Activated T-helper 2 cell treated with anti-CD3 and anti-CD28 coated beads, Interferon-gamma antibody, Interleukin-2, Interleukin-4, amounts not matched to agents 10 μg/mL and 5 μg/mL and 100 μg/mL, durations not matched to agents 14 hours and 24 hours and 36 hours (primary cell): ENCODE measurements at regions of chr12 and their contacts with region 1.

Region 1: DNA sequence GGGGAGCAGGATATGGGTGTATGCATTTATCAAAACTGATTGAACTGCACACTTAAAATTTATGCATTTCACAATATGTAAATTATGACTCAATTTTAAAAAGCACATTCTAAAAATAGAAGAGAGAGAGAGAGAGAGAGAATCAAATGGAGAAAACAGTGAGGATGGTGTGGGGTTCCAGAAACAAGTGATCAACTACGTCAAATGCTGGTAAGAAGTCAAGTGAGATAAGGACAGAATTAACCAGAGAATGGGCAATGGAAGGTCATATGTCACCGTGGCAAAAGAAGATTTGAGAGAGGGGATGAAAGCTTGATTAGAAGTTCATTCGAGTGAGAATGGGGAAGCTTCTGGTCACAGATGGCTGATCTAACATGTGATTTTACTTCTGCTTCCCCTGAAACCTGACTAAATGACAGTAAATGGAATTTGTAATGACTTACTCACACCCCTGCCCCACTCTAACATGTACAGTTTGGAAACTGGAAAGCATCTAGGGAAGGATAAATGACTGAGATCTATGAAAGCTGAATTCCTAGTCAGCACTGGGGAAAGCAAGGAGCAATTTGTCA is 276.5 kb upstream of the AMIGO2 start:
- DNase-seq: no peak
- H3K4me3 Mint-ChIP-seq: peak overlapping the region; percentile 45
- H3K27ac Mint-ChIP-seq: peak overlapping the region; percentile 96
- H3K4me1 Mint-ChIP-seq: peaks cover 67% of the 10 kb centered on the region
- H3K27me3 Mint-ChIP-seq: no peaks in the 10 kb centered on the region

Region 2: GRCh38 chr12:46608431-46609272 is 747.6 kb before region 1 on chr12:
- intact Hi-C with region 1: loop called (anchors 5 kb)
- DNase-seq: no peak
- H3K4me3 Mint-ChIP-seq: peak overlapping the region; percentile 37
- H3K27ac Mint-ChIP-seq: peak overlapping the region; percentile 65
- H3K4me1 Mint-ChIP-seq: peaks cover 37% of the 10 kb centered on the region
- H3K27me3 Mint-ChIP-seq: no peaks in the 10 kb centered on the region

Region 3: GRCh38 chr12:47085815-47086252 is 270.4 kb before region 1 on chr12:
- intact Hi-C with region 1: loop called (anchors 2 kb)
- DNase-seq: no peak
- H3K4me3 Mint-ChIP-seq: no peak overlapping the region
- H3K27ac Mint-ChIP-seq: peak overlapping the region; percentile 48
- H3K4me1 Mint-ChIP-seq: peaks cover 55% of the 10 kb centered on the region
- H3K27me3 Mint-ChIP-seq: no peaks in the 10 kb centered on the region

Region 4: DNA sequence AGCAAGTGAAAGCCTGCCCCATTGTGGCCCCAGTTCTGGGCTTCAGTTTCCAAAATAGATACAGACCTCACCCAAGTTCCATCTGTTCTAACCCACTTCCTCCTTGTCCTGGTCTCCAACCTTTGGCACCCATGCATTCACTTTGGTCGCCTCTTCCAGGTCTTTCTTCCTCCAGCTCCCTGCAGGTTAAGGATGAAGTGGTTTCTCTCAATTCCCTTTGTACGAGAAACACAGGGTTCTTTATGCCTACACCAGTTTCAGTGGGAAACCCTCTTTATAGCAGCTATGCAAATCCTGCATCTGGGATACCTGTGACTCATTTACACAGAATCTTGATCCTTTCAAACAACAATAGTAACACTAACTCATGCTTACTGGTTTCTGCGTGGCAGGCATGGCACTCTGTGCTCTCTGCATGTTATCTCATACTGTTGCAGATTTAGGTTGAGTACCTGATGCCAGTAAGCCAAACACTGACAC is 165.9 kb before region 1 on chr12:
- intact Hi-C with region 1: loop called (anchors 1 kb)
- DNase-seq: no peak
- H3K4me3 Mint-ChIP-seq: no peak overlapping the region
- H3K27ac Mint-ChIP-seq: peak overlapping the region; percentile 77
- H3K4me1 Mint-ChIP-seq: peaks cover 64% of the 10 kb centered on the region
- H3K27me3 Mint-ChIP-seq: no peaks in the 10 kb centered on the region

Region 5: DNA sequence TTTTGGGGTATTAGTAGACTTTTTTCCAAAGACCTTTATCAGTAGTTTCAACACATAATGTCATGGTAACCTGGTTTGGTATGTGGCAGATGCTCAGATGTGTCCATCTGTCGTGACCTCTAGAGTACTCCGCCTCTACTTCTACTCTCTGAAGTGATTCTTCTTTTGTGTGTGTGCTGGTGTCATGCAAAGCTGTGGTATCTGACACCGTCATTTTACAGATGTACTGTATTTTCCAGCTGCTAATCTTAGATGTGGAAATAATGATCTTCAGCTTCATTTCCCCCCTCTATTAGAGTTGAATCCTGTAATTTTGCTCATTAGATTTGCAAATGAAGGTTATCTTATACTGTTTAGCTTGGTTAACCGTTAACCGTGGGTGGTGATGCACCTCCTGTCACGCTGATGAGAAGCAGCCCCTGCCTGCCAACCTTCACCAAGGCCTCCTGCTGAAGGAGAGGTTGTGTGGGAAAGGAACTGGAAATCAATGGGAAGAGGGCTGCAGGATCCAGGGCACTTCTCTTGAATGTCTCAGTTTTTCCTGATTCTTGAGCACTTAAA is 54.0 kb before region 1 on chr12:
- intact Hi-C with region 1: loop called (anchors 2 kb)
- DNase-seq: no peak
- H3K4me3 Mint-ChIP-seq: no peak overlapping the region
- H3K27ac Mint-ChIP-seq: peak overlapping the region; percentile 91
- H3K4me1 Mint-ChIP-seq: peaks cover 47% of the 10 kb centered on the region
- H3K27me3 Mint-ChIP-seq: no peaks in the 10 kb centered on the region

Region 6: DNA sequence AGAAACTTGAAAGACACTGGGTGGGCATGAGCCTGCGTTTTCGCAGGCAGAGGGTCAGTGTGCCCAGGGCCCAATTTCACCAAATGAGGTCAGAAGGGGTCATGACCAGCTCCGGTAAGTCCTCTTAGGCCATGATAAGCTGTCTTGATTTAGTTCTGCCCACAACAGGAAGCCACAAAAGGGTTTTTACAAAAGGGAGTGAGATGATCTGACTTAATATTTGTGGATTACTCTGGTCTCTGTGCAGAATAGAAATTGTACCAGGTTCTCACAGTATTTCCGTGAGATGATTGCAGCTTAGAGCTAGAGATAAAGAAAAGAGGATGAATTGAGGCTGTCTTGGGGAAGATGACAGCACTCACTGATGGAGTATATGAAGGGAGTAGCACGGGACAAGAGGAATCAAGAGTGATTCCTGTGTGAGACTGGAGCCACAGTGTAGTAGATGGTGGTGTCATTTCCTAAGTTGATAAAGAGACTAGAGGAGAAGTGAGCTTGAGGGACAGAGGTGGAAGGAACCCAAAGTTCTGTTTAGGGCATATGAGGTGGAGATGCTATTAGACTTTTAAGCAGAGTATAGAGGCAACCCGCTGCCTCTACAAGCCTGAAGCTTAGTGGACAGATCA is 11.8 kb after region 1 on chr12:
- intact Hi-C with region 1: loop called (anchors 2 kb)
- DNase-seq: no peak
- H3K4me3 Mint-ChIP-seq: no peak overlapping the region
- H3K27ac Mint-ChIP-seq: no peak overlapping the region
- H3K4me1 Mint-ChIP-seq: peaks cover 5% of the 10 kb centered on the region
- H3K27me3 Mint-ChIP-seq: no peaks in the 10 kb centered on the region

Region 7: DNA sequence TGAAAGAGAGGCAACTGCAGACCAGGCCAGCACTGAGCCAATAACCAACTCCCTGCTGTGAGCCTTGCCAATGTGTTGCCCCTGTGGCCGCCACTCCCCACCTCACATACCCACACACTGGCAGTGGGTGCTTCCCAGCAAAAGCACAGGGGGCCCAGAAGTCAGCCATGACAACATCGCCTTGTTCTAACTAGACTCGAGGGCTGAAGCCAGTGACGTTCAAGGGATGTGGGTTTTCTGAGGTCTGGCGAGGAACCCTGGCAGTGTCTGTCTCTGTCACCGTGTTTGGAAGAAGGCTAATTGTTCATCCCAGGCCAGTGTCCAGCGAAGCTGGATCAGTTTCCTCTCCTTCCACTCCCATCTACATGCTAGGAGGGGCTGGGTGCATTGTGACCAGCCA is 35.4 kb after region 1 on chr12:
- intact Hi-C with region 1: loop called (anchors 1 kb)
- DNase-seq: peak; percentile 54
- H3K4me3 Mint-ChIP-seq: peak overlapping the region; percentile 64
- H3K27ac Mint-ChIP-seq: peak overlapping the region; percentile 100
- H3K4me1 Mint-ChIP-seq: peaks cover 75% of the 10 kb centered on the region
- H3K27me3 Mint-ChIP-seq: no peaks in the 10 kb centered on the region